Activated naive CD4-positive, alpha-beta T cell treated with anti-CD3 and anti-CD28 coated beads for 36 hours (primary cell): ENCODE measurements at regions of chr15 and their contacts with region 1.

Region 1: DNA sequence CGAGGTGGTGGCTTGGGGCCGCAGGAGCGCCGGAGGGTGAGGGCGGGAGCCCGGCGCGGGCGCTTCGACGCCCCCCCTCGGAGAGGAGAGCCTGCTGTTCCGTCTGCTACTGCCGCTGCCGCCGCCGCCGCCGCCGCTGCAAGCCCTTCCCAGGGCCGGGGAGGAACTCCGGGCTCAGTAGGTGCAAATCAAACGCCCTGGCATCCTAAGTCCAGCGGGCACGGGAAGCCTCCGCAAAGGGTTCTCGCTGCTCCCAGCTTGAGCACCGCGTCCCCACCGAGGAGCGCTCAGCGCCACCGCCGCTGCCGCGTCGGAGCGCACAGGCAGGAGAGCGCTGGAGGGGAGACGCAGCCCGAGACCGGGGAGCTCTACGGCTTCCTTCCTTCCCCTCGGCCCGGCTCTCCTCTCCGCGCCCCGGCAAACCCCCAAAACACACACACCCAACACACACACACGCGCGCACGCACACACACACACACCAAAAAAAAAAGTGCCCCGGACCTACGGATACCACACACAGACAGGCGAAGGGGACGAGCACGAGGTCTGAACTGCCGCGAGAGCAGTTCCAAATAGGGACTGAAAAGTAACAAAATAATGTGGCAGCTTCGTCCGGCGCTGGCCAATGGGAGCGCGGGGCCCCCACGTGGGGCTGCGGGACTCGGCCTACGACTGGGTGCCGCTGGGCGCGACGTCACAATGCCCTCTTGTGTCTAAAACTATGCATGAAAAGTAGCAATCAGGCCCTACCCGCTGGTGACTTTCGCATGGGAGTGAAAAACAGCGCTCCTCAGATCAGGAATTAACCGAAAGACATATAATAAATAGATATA is at the start of gene TLE3:
- DNase-seq: peak; percentile 98
- H3K4me3 Mint-ChIP-seq: peak within 1 kb of the TSS; percentile 99
- H3K27ac Mint-ChIP-seq: peak within 1 kb of the TSS; percentile 99
- H3K4me1 Mint-ChIP-seq: peaks cover 37% of the 10 kb centered on the region
- H3K27me3 Mint-ChIP-seq: peaks cover 2% of the 10 kb centered on the region
- total RNA-seq, gene TLE3: 105 to 109 TPM

Region 2: DNA sequence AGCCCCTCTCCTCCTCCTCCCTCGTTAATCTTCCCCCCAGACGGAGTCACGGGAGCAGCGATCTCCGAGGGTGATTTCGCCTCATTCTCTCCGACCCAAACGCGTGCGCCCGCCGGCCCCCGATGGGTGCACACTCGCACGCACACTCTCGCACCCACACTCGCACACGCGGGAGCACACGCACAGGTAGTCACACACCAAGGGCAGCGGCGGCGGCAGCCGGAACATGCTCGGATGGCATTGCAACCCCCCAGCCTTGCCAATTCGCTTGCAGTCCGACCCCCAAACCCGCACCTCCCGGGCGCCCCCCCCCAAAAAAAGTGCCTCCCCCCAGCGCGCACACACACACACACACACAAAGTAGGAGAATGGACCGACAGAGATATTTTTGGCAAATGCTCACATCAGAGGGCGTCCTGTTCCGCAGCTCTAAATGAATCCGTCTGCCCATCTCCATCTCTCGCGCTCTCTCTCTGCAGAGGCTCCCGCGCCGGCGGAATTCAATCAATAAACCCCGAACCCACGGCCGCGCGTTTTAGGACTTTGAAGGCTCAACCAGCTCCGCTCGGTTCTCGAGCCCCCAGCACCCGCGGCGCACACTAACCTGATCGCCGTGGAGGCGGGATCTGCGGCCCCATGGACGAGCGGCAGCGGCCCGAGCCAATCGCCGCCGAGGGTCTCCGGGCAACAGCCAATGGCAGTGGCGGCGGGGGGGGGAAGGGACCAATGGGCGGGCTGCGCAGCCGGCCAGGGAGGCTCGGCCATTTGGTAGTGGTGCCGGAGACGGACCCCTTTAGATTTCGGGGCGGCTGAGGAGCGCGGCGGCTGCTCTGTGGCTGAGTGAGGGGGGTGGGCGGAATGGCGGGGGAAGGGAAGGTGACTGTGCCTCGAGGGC is 1277.0 kb before region 1 on chr15 and contains the start of gene ANP32A:
- CTCF ChIA-PET with region 1: no interaction called
- intact Hi-C with region 1: loop called (anchors 5 kb)
- DNase-seq: peak; percentile 95
- H3K4me3 Mint-ChIP-seq: peak within 1 kb of the TSS; percentile 84
- H3K27ac Mint-ChIP-seq: peak within 1 kb of the TSS; percentile 94
- H3K4me1 Mint-ChIP-seq: peaks cover 31% of the 10 kb centered on the region
- H3K27me3 Mint-ChIP-seq: no peaks in the 10 kb centered on the region
- total RNA-seq, gene ANP32A: 216 to 245 TPM

Region 3: GRCh38 chr15:69576035-69576526 is 521.5 kb before region 1 on chr15:
- CTCF ChIA-PET with region 1: interaction called, 3 read pairs
- intact Hi-C with region 1: loop called (anchors 1 kb)
- DNase-seq: peak; percentile 82
- H3K4me3 Mint-ChIP-seq: no peak overlapping the region
- H3K27ac Mint-ChIP-seq: peak overlapping the region; percentile 17
- H3K4me1 Mint-ChIP-seq: peaks cover 30% of the 10 kb centered on the region
- H3K27me3 Mint-ChIP-seq: no peaks in the 10 kb centered on the region

Region 4: DNA sequence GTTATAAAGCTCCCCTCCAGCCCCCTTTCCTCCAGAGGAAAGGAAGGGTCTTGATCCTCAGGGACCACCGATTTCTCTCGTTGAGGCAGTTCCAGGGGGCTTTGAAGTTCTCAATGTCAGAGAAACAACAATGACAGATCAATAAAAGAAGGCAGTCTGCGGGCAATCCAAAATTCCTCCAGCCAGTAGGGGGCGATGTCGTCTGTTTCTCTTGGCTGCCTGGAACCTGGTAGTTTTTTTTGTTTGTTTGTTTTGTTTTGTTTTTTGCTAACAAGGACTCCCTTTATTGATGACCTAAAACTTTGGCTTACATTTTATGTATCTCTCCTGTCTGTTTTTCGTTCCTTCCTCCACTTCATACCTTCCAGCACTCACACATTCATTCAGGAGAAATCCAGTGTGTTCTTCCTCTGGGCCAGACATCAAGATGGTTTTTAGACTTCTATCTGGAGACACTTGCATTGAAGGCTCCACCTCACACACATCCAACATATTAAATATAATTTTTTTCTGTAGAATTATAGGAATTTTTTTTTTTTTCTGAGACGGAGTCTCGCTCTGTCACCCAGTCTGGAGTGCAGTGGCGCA is 368.3 kb before region 1 on chr15:
- CTCF ChIA-PET with region 1: interaction called, 4 read pairs
- intact Hi-C with region 1: loop called (anchors 2 kb)
- DNase-seq: peak; percentile 88
- H3K4me3 Mint-ChIP-seq: no peak overlapping the region
- H3K27ac Mint-ChIP-seq: no peak overlapping the region
- H3K4me1 Mint-ChIP-seq: peaks cover 21% of the 10 kb centered on the region
- H3K27me3 Mint-ChIP-seq: no peaks in the 10 kb centered on the region

Region 5: DNA sequence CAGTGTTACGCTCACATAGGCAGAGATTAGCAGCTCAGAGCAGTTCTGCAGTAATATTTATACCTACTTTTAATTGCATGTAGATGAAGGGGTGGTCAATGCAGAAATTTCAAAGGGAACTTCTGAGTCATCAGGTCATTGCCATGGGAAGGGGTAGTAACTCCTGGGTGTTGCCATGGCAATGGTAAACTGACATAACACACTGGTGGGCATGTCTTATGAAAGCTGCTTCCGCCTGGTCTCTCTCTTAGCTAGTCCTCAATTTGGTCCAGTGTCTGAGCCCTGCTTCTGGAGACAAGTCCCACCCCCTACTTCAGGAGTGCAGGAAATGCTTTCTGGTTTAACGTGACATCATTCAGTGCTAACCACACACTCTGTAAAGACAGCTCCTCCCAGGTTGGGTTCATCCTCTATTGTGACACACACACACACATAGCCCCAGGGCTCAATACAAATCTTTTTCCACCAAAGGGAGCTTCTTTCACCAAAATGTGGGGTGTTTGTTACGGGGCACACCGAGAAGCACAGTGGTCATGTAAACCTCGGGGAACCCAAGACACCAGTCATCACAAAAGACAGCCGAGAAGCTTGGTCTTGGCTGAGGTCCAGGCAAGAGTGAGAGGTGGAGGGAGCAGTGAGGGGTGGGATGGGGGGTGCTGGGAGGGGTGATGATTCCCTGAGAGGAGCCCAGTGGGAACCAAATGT is 74.3 kb before region 1 on chr15:
- CTCF ChIA-PET with region 1: no interaction called
- intact Hi-C with region 1: loop called (anchors 5 kb)
- DNase-seq: peak; percentile 70
- H3K4me3 Mint-ChIP-seq: no peak overlapping the region
- H3K27ac Mint-ChIP-seq: peak overlapping the region; percentile 42
- H3K4me1 Mint-ChIP-seq: peaks cover 15% of the 10 kb centered on the region
- H3K27me3 Mint-ChIP-seq: no peaks in the 10 kb centered on the region

Region 6: DNA sequence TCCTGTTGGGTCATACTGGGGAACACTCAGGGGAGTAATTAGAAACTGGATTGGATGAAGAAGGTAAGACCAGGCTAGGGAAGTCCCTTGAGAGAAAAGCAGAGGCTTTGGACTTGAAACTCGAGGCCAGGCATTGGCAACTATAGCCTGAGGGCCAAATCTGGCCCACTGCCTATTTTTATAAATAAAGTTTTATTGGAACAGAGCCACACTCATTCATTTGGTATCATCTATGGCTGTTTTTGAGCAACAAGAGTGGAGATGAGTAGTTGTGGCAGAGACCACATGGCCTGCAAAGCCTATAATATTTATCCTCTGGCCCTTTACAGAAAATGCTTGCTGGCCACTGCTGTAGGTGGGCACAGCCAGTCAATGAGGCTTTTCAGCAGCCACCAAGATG is 364.4 kb after region 1 on chr15:
- CTCF ChIA-PET with region 1: interaction called, 5 read pairs
- intact Hi-C with region 1: loop called (anchors 2 kb)
- DNase-seq: no peak
- H3K4me3 Mint-ChIP-seq: no peak overlapping the region
- H3K27ac Mint-ChIP-seq: no peak overlapping the region
- H3K4me1 Mint-ChIP-seq: peaks cover 11% of the 10 kb centered on the region
- H3K27me3 Mint-ChIP-seq: no peaks in the 10 kb centered on the region

Region 7: DNA sequence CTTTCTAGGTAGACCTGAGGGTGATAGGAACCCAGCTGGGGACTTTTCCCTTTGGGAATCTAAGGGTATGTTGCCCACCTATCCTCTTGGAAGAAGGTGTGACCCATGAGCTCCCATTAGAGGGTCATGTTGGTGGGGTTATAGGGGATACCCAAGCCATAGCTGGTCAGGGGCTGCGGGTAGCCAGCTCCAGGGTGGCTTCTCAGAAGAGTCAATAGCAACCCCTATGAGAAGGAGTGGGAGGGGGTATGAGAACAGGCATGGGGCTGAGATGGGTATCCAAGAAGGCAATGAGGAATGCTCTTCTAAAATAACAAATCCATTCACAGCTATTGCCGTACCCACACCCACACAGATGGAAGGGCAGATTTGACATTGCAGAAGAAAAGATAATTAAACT is 448.0 kb after region 1 on chr15:
- CTCF ChIA-PET with region 1: no interaction called
- intact Hi-C with region 1: loop called (anchors 5 kb)
- DNase-seq: no peak
- H3K4me3 Mint-ChIP-seq: no peak overlapping the region
- H3K27ac Mint-ChIP-seq: peak overlapping the region; percentile 91
- H3K4me1 Mint-ChIP-seq: peaks cover 60% of the 10 kb centered on the region
- H3K27me3 Mint-ChIP-seq: no peaks in the 10 kb centered on the region